Psoas muscle (tissue), 8 donors: ENCODE measurements at regions of chr15 and their contacts with region 1.

Region 1: GRCh38 chr15:67080900-67081431 is 15.6 kb downstream of the SMAD3 start:
- DNase-seq: peak; percentile 75 to 83
- ATAC-seq: peak; percentile 85 to 92 (median 88)
- H3K4me3 ChIP-seq: peak overlapping the region; percentile 1
- H3K27ac ChIP-seq: peak overlapping the region; percentile 84
- H3K4me1 ChIP-seq: peaks cover 91% of the 10 kb centered on the region
- H3K27me3 ChIP-seq: no peaks in the 10 kb centered on the region
- CTCF ChIP-seq: peak; percentile 21

Region 2: DNA sequence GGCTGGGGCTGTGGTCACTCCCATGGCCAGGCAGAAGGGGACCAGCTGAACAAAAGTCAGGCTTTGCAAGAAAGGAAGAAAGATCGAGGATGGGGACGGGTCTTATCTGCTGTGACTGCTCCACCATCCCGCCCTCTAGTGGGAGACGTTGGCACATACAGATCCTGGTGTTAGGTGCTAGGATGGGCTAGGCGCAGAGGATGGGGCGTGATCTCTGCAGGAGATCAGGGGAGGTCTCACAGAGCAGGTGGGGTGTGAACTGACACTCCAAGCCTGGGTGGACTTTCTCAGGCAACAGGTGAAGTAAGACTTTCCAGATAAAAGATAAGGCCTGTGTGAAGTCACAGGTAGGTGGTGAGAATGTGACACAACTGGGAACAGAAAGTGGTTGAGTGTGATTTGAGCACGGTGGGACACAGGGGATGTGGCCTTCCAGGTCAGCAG is 157.5 kb before region 1 on chr15:
- intact Hi-C with region 1: no loop called
- DNase-seq: no peak
- ATAC-seq: no peak
- H3K4me3 ChIP-seq: no peak overlapping the region
- H3K27ac ChIP-seq: no peak overlapping the region
- H3K4me1 ChIP-seq: no peaks in the 10 kb centered on the region
- H3K27me3 ChIP-seq: peaks cover 0 to 6% (median 4%) of the 10 kb centered on the region in 3 donors
- CTCF ChIP-seq: no peak

Region 3: GRCh38 chr15:67125589-67126502 is 44.9 kb after region 1 on chr15:
- intact Hi-C with region 1: loop called in 1 of 2 experiments (anchors 5 kb)
- DNase-seq: peak; percentile 90 to 95
- ATAC-seq: peak; percentile 86 to 90 (median 89)
- H3K4me3 ChIP-seq: peak overlapping the region; percentile 31
- H3K27ac ChIP-seq: peak overlapping the region; percentile 97
- H3K4me1 ChIP-seq: peaks cover 88% of the 10 kb centered on the region
- H3K27me3 ChIP-seq: no peaks in the 10 kb centered on the region
- CTCF ChIP-seq: no peak

Region 4: DNA sequence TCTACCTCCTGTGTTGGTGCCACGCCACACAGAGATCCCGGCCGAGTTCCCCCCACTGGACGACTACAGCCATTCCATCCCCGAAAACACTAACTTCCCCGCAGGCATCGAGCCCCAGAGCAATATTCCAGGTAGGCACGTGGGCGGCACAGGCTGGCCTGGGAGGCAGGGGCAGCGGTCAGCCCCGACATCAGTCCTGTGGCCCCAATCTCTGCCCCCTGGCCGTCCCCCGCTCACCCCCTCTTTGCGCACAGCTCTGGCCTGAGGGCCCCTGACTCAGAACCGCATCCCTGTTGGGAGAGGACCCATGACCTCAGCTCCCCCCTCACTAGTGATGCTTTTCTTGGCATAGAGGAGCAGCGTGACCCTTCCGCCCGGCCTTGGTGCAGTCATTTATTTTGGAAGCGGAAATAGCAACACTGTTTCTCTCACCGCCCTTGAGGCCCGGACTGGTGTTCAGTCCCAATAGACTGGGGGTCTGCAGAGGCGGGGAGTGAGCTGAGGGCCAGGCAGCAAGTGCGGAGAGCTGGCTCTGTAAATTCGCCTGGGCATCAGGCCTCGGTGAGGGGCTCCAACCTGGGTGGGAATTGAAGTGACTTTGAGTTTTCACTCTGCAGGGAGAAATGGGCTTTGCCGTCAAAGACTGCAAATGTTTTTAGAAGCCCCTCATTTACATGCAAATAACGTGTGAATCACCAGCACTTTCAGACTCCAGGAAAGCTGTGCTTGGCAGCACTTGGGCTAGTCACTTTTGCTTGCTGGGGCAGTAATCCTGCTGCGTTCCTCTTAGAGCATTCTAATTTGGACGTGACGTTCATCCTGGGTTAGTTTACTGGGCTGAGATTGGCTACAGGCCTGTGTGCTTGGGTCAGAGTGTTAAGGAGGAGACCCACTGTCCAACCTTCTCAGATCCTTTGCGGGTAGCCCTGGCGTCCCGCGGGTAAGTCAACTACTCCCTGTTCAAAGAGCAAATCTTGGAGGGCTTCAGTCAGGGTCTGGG is 84.6 kb after region 1 on chr15:
- intact Hi-C with region 1: loop called (anchors 5 kb)
- DNase-seq: peak in 1 of 2 donors; percentile 65
- ATAC-seq: peak; percentile 19 to 44 (median 42)
- H3K4me3 ChIP-seq: peak overlapping the region; percentile 36
- H3K27ac ChIP-seq: peak overlapping the region; percentile 88
- H3K4me1 ChIP-seq: peaks cover 89% of the 10 kb centered on the region
- H3K27me3 ChIP-seq: no peaks in the 10 kb centered on the region
- CTCF ChIP-seq: no peak

Region 5: GRCh38 chr15:67188551-67189218 is 107.7 kb after region 1 on chr15:
- intact Hi-C with region 1: loop called in 1 of 2 experiments (anchors 1 kb)
- DNase-seq: peak in 1 of 2 donors; percentile 64
- ATAC-seq: no peak
- H3K4me3 ChIP-seq: no peak overlapping the region
- H3K27ac ChIP-seq: peak overlapping the region; percentile 90
- H3K4me1 ChIP-seq: peaks cover 97% of the 10 kb centered on the region
- H3K27me3 ChIP-seq: no peaks in the 10 kb centered on the region
- CTCF ChIP-seq: no peak

Region 6: GRCh38 chr15:68277603-68278344 is 1196.8 kb after region 1 on chr15 and contains the start of gene FEM1B:
- intact Hi-C with region 1: loop called in 1 of 2 experiments (anchors 10 kb)
- DNase-seq: peak; percentile 93 to 96
- ATAC-seq: peak; percentile 77 to 91 (median 88)
- H3K4me3 ChIP-seq: peak within 1 kb of the TSS; percentile 85
- H3K27ac ChIP-seq: peak within 1 kb of the TSS; percentile 97
- H3K4me1 ChIP-seq: peaks cover 61% of the 10 kb centered on the region
- H3K27me3 ChIP-seq: no peaks in the 10 kb centered on the region
- CTCF ChIP-seq: peak; percentile 27
- total RNA-seq, gene FEM1B: 69.3 to 188 (median 111) TPM